ENCODE measurements at regions of chr2 and their contacts with region 1.

Region 1: DNA sequence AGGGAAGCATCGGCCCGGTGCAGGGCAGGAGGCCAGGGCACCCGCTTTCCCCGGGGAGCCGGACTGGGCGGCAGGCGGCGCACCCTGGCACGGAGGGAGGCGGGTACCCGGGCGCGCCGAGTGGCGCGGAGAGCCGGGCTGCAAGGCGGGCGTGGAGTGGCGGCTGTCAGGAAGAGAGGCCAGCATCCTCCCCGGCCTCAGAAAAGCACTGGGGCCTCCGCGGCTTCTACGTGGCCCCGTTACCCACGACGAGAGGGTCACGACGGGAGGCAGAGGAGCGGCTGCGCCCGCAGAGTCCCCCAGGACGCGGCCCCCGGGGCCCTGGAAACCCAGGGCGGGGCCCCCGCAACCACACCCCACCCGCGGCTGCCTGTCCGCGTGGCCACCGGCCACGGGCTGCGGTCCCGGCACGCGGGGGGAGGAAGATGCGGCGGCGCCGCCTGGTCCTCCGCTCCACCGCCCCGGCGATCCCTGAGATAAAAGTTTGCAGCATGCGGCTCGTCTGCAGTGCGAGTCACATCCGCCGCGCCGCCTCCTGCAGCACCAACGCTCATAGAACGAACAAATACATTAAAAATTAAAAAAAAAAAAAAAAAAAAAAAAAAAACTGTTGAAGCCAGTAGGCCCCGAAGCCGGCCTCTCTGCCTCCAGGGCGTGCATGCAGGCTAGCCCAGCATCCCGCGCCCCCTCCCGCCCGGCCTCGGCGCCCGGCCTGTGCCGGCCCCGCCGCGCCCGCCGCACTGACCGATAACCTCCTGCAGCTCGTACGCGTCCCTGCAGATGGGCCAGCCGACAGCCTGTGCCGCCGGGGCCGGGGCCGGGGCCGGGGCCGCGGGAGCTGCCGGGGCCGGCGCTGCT is 683 bp downstream of the STK39 start:
- DNase-seq: peak; percentile 71
- H3K4me3 ChIP-seq: peak overlapping the region; percentile 81
- H3K27ac ChIP-seq: no peak overlapping the region
- H3K4me1 ChIP-seq: peaks cover 12% of the 10 kb centered on the region
- H3K27me3 ChIP-seq: no peaks in the 10 kb centered on the region
- CTCF ChIP-seq: peak; percentile 39; the same call in 1 of the 2 replicates

Region 2: GRCh38 chr2:168136392-168136977 is 110.2 kb before region 1 on chr2:
- CTCF ChIA-PET with region 1: no interaction called
- POLR2A ChIA-PET with region 1: no interaction called
- intact Hi-C with region 1: loop called (anchors 5 kb)
- DNase-seq: peak; percentile 68
- H3K4me3 ChIP-seq: no peak overlapping the region
- H3K27ac ChIP-seq: peak overlapping the region; percentile 64
- H3K4me1 ChIP-seq: peaks cover 40% of the 10 kb centered on the region
- H3K27me3 ChIP-seq: no peaks in the 10 kb centered on the region
- CTCF ChIP-seq: peak; percentile 68